Left cardiac atrium (tissue), 4 donors: ENCODE measurements at regions of chr12 and their contacts with region 1.

Region 1: DNA sequence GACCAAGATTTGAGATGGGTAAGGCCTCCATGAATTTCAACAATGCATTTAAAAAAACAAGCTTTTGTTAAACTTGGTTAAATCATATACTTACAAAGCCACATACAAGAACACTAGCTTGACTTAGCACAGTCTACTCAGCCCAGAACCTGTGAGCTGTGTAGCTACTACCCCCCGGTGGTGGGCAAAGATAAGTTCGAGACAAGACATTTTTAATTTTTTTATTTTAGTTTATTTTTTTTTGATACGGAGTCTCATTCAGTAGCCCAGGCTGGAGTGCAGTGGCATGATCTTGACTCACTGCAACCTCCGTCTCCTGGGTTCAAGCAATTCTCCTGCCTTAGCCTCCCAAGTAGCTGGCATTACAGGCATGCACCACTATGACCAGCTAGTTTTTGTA is 3.7 kb upstream of the NECAP1 start:
- DNase-seq: no peak
- ATAC-seq: no peak

Region 2: GRCh38 chr12:8038659-8039114 is 39.7 kb before region 1 on chr12:
- intact Hi-C with region 1: loop called in 1 of 2 experiments (anchors 5 kb)
- DNase-seq: peak; percentile 71
- ATAC-seq: peak; percentile 94 to 95